ENCODE measurements at regions of chr1 and their contacts with region 1.

Region 1: GRCh38 chr1:197180252-197180878 is 33.9 kb upstream of the ASPM start:
- DNase-seq: peak in 2 of 3 donors; percentile 6 to 19
- H3K4me3 ChIP-seq: no peak overlapping the region
- H3K4me3 Mint-ChIP-seq: no peak overlapping the region
- H3K27ac ChIP-seq: no peak overlapping the region
- H3K27ac Mint-ChIP-seq: no peak overlapping the region
- H3K4me1 ChIP-seq: peaks cover 2 to 5% of the 10 kb centered on the region in 2 donors
- H3K4me1 Mint-ChIP-seq: peaks cover 3% of the 10 kb centered on the region
- H3K27me3 ChIP-seq: no peaks in the 10 kb centered on the region
- H3K27me3 Mint-ChIP-seq: no peaks in the 10 kb centered on the region
- CTCF ChIP-seq: peak; percentile 63

Region 2: GRCh38 chr1:197130677-197131304 is 49.6 kb before region 1 on chr1:
- intact Hi-C with region 1: no loop called
- DNase-seq: no peak
- H3K4me3 ChIP-seq: no peak overlapping the region
- H3K4me3 Mint-ChIP-seq: no peak overlapping the region
- H3K27ac ChIP-seq: no peak overlapping the region
- H3K27ac Mint-ChIP-seq: no peak overlapping the region
- H3K4me1 ChIP-seq: no peaks in the 10 kb centered on the region
- H3K4me1 Mint-ChIP-seq: no peaks in the 10 kb centered on the region
- H3K27me3 ChIP-seq: no peaks in the 10 kb centered on the region
- H3K27me3 Mint-ChIP-seq: no peaks in the 10 kb centered on the region
- CTCF ChIP-seq: no peak

Region 3: GRCh38 chr1:197356723-197357533 is 176.6 kb after region 1 on chr1:
- intact Hi-C with region 1: loop called in 1 of 2 experiments (anchors 5 kb)
- DNase-seq: peak in 1 of 3 donors; percentile 9
- H3K4me3 ChIP-seq: no peak overlapping the region
- H3K4me3 Mint-ChIP-seq: no peak overlapping the region
- H3K27ac ChIP-seq: no peak overlapping the region
- H3K27ac Mint-ChIP-seq: no peak overlapping the region
- H3K4me1 ChIP-seq: no peaks in the 10 kb centered on the region
- H3K4me1 Mint-ChIP-seq: no peaks in the 10 kb centered on the region
- H3K27me3 ChIP-seq: no peaks in the 10 kb centered on the region
- H3K27me3 Mint-ChIP-seq: no peaks in the 10 kb centered on the region
- CTCF ChIP-seq: peak; percentile 59

Measured in CD14-positive monocyte (primary cell).